Activated CD8-positive, alpha-beta T cell treated with anti-CD3 and anti-CD28 coated beads for 36 hours (primary cell): ENCODE measurements at regions of chr6 and their contacts with region 1.

Region 1: DNA sequence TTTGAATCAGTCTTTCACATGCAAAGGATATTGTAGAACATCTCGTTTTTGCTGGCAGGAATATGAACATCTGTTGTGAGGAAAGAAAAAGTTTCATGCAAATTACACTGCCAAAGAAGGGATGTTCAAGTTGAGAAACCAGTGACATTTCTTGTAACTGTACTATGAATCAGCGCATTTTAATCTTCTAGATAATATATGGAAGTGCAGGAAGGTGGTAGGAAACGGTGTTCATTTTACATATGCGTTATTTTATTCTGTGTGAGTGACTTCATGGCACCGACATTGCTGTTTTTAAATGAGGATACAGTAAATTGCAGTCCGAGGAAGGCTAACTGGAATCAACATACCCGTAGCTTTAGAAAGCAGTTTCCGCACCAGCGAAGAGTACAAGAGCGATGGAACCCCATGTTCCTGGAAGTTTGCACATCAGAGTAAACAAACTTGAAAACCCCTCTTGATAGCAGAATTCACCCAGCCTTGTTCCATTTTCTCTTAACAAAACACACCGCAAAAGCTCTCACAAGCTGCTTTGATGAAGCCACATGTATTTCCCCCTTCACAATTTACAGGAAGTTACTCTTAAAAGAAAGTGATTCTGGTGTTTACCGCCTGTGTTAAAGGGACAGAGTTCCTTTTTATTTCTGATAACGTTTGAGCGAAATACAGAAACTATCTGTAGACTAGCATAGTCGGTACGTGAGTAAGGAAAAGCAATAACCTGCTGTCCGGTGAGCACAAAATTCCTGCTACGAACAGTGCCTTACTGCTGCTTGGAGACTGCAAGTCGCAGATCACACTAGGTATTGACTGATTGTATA is 11.5 kb downstream of the PRDM1 start:
- DNase-seq: peak; percentile 68
- ATAC-seq: peak; percentile 42
- H3K4me3 Mint-ChIP-seq: peak overlapping the region; percentile 78
- H3K27ac Mint-ChIP-seq: peak overlapping the region; percentile 96
- H3K4me1 Mint-ChIP-seq: peaks cover 84% of the 10 kb centered on the region
- H3K27me3 Mint-ChIP-seq: peaks cover 10% of the 10 kb centered on the region
- CTCF ChIP-seq: no peak

Region 2: DNA sequence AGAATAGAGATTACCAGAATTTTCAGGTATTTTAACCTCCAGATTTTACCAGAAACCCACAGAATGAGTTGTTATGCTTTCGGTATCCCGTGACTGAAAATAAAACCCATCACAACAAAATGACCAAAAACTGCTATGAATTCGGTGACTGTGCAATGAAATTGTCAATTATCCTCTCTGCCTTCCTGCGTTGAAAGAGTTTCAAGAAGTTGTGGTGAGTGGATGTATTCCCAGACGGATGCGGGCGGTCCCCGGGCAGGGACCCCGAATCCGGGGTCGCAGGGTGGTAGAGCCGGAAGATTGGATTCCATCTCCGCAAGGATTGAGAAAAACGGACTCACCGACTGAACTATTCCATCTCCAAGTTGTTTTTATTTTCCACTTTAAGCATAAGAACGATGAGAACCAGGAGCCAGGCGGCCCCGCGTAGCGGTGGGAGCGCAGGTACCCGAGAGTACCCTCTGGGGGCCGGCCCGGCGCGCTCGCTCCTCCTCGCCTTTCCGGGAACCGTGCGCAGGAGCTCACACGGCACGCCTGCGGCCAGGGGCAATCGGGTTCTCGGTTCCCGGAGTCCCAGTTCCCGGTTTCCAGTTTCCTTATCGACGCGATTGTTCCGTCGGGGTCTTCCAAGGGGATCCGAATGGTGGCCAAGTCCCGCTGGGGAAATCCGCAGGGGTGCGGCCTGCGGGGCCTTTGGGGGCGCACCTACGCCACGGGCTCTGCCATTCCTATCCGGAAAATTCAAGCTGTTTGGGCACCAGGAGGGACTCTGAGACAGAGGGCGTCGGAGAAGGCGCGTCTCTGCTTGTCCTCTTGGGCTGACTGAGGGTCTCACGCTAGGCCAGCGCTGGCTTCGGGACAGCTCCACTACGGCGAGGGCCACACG is 116.4 kb before region 1 on chr6:
- CTCF ChIA-PET with region 1: interaction called, 5 read pairs
- POLR2A ChIA-PET with region 1: interaction called, 10 read pairs
- intact Hi-C with region 1: no loop called
- DNase-seq: peak; percentile 45
- ATAC-seq: peak; percentile 47
- H3K4me3 Mint-ChIP-seq: peak overlapping the region; percentile 66
- H3K27ac Mint-ChIP-seq: peak overlapping the region; percentile 67
- H3K4me1 Mint-ChIP-seq: peaks cover 38% of the 10 kb centered on the region
- H3K27me3 Mint-ChIP-seq: peaks cover 57% of the 10 kb centered on the region
- CTCF ChIP-seq: no peak

Region 3: DNA sequence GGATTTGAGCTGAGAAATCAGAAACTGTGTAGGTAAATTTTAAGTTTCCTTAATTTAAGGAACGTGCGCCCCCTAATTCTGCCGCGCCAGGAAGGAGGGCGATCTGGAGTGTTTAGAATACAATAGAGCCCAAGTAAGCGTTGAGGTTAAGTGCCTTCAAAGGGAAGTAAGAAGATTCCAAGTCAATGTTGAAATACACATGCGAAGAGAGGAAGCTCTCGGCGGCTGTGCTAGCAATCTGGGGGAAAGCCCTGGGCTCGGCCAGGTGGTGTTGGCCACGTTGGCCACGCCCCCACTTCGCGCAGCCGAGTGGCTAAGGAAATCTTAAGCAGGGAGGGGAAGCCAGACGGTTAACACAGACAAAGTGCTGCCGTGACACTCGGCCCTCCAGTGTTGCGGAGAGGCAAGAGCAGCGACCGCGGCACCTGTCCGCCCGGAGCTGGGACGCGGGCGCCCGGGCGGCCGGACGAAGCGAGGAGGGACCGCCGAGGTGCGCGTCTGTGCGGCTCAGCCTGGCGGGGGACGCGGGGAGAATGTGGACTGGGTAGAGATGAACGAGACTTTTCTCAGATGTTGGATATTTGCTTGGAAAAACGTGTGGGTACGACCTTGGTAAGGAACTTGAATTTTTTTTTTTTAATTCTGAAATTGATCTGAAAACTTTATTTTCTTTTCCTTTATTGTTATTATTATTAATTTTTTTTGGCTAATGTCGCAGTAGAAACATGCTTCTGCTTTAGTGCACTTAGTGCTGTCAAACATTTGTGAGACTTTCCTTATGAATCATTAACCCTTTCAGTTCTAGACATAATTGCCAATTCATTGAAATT is 11.4 kb before region 1 on chr6 and contains the start of gene PRDM1:
- CTCF ChIA-PET with region 1: interaction called, 9 read pairs
- POLR2A ChIA-PET with region 1: interaction called, 40 read pairs
- intact Hi-C with region 1: no loop called
- DNase-seq: peak; percentile 89
- ATAC-seq: peak; percentile 84
- H3K4me3 Mint-ChIP-seq: peak within 1 kb of the TSS; percentile 78
- H3K27ac Mint-ChIP-seq: peak within 1 kb of the TSS; percentile 75
- H3K4me1 Mint-ChIP-seq: peaks cover 59% of the 10 kb centered on the region
- H3K27me3 Mint-ChIP-seq: peaks cover 57% of the 10 kb centered on the region
- CTCF ChIP-seq: peak; percentile 20
- total RNA-seq, gene PRDM1: 24.6 to 24.7 TPM

Region 4: DNA sequence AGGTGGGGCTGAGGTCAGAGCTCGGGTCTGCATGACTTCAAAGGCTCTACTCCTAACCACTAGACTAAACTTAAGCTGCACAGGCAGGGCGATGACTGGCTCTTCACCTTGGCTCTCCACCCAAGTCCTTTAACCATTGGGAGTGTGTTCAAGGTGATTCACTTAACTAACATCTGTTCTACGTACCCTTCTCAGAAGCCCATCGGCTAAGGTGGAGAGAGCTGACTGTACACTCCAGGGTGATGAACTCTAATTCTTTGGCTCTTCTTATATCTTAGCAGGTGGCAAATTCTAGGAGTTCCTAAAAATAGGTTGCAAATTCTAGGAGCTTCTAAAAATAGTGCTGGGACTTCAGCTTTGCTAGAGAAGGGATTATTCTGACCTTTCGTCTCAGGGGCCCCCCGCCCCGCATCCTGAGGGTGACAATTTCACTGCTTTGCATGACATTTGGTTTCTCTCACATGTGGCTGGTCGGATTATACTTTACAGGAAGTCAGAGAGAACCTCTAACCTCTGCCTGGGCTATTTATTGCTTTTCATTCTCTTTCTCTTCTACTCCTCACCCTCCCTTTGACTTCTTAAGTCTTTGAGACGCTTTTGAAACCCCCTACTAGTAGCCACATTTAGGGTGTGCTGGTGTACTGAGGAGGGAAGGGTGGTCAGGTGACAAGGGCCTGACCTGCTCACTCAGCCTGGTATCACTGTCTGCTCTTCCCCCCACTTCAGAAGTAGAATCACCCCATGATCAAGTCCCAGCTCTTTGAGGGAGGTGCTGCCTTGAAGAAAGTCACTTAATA is 44.0 kb after region 1 on chr6:
- CTCF ChIA-PET with region 1: interaction called, 6 read pairs
- POLR2A ChIA-PET with region 1: interaction called, 11 read pairs
- intact Hi-C with region 1: loop called (anchors 1 kb)
- DNase-seq: peak; percentile 96
- ATAC-seq: peak; percentile 89
- H3K4me3 Mint-ChIP-seq: peak overlapping the region; percentile 20
- H3K27ac Mint-ChIP-seq: peak overlapping the region; percentile 96
- H3K4me1 Mint-ChIP-seq: peaks cover 64% of the 10 kb centered on the region
- H3K27me3 Mint-ChIP-seq: peaks cover 2% of the 10 kb centered on the region
- CTCF ChIP-seq: no peak

Region 5: DNA sequence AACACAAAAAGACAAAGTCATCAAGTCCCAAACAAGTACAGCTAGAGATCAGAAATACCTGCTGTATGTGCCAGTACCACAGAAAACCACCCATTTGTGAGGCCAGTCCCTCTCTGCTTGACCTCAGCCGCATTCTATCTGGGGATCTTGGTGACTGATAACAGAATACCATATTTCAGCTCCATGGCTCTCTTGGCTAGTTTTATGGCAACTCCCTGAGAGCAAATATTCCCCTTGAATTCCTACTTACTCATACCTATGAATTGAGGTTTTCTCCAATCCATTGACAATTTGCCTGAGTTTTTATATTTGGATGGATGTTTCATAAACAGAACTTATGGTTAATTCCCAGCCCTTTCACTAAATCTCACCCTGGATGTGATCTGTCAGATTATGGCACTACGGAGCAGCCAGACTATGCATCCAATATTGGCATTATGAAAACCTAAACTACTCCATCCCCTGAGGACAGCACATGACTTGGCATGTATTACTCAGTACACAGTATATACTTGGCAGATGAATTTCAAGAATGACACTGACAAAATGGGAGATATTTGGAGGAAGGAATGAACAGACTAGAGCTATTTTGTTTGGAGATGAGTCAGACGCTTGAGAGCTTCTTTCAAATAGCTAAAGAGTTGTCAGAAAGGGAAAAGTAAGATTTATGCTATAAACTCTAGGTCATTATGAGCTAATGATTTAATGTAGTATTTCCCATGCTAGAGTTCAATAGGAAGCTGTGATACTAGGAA is 84.2 kb after region 1 on chr6:
- CTCF ChIA-PET with region 1: interaction called, 3 read pairs
- POLR2A ChIA-PET with region 1: interaction called, 44 read pairs
- intact Hi-C with region 1: no loop called
- DNase-seq: no peak
- ATAC-seq: peak; percentile 40
- H3K4me3 Mint-ChIP-seq: no peak overlapping the region
- H3K27ac Mint-ChIP-seq: peak overlapping the region; percentile 8
- H3K4me1 Mint-ChIP-seq: peaks cover 53% of the 10 kb centered on the region
- H3K27me3 Mint-ChIP-seq: peaks cover 2% of the 10 kb centered on the region
- CTCF ChIP-seq: no peak

Region 6: GRCh38 chr6:106223300-106223930 is 125.8 kb after region 1 on chr6:
- CTCF ChIA-PET with region 1: interaction called, 63 read pairs
- POLR2A ChIA-PET with region 1: interaction called, 5 read pairs
- intact Hi-C with region 1: loop called (anchors 10 kb)
- DNase-seq: peak; percentile 92
- ATAC-seq: peak; percentile 76
- H3K4me3 Mint-ChIP-seq: no peak overlapping the region
- H3K27ac Mint-ChIP-seq: no peak overlapping the region
- H3K4me1 Mint-ChIP-seq: peaks cover 16% of the 10 kb centered on the region
- H3K27me3 Mint-ChIP-seq: no peaks in the 10 kb centered on the region
- CTCF ChIP-seq: peak; percentile 89

Region 7: DNA sequence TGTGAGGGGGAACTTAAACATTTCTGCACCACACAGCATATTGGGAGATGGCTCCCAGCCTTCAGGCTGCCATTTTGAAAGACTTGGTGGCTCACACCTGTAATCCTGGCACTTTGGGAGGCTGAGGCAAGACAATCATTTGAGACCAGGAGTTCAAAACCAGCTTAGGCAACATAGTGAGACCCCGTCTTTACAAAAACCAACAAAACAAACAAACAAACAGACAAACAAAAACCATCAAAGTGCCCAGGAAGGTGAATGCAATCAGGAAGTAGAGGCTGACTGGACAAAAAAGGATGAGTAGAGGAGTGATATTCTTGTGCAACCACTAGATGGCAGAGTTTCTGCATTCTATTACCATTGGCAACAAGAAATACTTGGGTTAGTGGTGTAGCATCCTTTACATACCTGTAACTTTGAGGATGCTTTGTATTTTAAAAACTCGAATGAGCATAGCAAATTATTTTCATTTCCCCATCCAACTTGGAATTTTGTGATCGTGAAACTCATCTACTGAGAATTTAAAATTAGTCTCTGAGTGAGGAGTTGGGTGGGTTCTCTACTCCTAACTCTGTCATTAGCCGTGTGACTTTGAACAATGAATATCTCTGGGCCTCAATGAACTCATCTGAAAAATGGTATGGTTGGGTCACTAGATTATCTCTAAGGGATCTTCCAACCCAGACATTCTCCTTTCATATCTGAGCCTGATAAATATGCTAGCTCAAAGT is 347.3 kb after region 1 on chr6:
- CTCF ChIA-PET with region 1: no interaction called
- POLR2A ChIA-PET with region 1: no interaction called
- intact Hi-C with region 1: no loop called
- DNase-seq: peak; percentile 17
- ATAC-seq: peak; percentile 81
- H3K4me3 Mint-ChIP-seq: no peak overlapping the region
- H3K27ac Mint-ChIP-seq: no peak overlapping the region
- H3K4me1 Mint-ChIP-seq: peaks cover 12% of the 10 kb centered on the region
- H3K27me3 Mint-ChIP-seq: peaks cover 18% of the 10 kb centered on the region
- CTCF ChIP-seq: peak; percentile 81

Region 8: DNA sequence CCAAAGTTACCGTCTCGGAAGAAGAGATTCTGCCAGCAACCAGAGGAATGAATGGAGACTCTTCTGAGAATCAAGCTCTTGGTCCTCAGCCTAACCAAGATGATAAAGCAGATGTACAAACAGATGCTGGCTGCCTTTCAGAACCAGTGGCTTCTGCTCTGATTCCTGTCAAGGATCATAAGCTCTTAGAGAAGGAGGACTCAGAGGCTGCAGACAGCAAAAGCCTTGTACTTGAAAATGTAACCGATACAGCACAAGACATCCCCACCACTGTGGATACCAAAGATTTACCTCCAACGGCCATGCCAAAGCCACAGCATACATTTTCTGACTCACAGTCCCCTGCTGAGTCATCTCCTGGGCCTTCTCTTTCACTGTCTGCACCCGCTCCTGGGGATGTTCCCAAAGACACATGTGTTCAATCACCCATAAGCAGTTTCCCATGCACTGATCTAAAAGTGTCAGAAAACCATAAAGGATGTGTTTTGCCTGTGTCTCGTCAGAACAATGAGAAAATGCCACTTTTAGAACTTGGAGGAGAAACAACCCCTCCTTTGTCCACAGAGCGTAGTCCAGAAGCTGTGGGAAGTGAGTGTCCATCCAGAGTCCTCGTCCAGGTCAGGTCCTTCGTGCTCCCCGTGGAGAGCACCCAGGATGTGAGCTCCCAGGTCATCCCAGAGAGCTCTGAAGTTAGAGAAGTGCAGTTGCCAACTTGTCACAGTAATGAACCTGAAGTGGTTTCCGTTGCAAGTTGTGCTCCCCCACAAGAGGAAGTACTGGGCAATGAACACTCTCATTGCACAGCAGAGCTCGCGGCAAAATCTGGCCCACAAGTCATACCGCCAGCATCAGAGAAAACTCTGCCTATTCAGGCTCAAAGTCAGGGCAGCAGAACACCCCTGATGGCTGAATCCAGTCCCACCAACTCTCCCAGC is 422.1 kb after region 1 on chr6:
- CTCF ChIA-PET with region 1: no interaction called
- POLR2A ChIA-PET with region 1: no interaction called
- intact Hi-C with region 1: loop called (anchors 5 kb)
- DNase-seq: peak; percentile 94
- ATAC-seq: peak; percentile 59
- H3K4me3 Mint-ChIP-seq: peak overlapping the region; percentile 77
- H3K27ac Mint-ChIP-seq: peak overlapping the region; percentile 99
- H3K4me1 Mint-ChIP-seq: peaks cover 61% of the 10 kb centered on the region
- H3K27me3 Mint-ChIP-seq: no peaks in the 10 kb centered on the region
- CTCF ChIP-seq: no peak